ENCODE measurements at regions of chr2 and their contacts with region 1.

Region 1: GRCh38 chr2:227095346-227095745 is 68.7 kb downstream of the COL4A4 start:
- DNase-seq: no peak
- H3K4me3 ChIP-seq: no peak overlapping the region
- H3K27ac ChIP-seq: no peak overlapping the region
- H3K4me1 ChIP-seq: peaks cover 0 to 5% of the 10 kb centered on the region in 2 experiments; a peak in 1 of 4 replicates
- H3K27me3 ChIP-seq: no peaks in the 10 kb centered on the region; the same call in 1 of the 2 replicates
- CTCF ChIP-seq: no peak
- EP300 ChIP-seq: no peak
- RAD21 ChIP-seq: no peak

Region 2: GRCh38 chr2:226887940-226888339 is 207.4 kb before region 1 on chr2:
- CTCF ChIA-PET with region 1: no interaction called
- POLR2A ChIA-PET with region 1: no interaction called
- DNase-seq: no peak
- H3K4me3 ChIP-seq: no peak overlapping the region
- H3K27ac ChIP-seq: no peak overlapping the region
- H3K4me1 ChIP-seq: peaks cover 2 to 14% of the 10 kb centered on the region in 2 experiments; a peak in 3 of 4 replicates
- H3K27me3 ChIP-seq: no peaks in the 10 kb centered on the region
- CTCF ChIP-seq: no peak
- EP300 ChIP-seq: no peak
- RAD21 ChIP-seq: no peak

Region 3: DNA sequence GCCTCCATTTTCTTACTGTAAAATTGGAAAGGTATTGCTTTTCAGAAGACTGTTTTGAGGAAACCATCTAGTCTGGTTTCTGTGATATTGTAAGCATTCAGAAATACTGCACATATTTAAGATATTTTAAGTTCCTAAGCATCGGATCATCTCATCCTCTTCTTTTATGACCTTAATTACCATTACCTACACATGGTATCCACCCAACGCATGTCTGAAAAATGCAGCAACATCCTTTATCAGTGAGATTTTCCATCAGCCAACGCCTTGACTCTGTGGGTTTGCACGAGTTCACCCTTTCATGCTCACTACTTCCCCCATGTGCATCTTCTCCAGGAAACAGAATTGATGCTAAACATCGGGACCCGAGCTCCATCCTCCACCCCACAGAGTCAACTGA is 15.6 kb before region 1 on chr2:
- CTCF ChIA-PET with region 1: no interaction called
- POLR2A ChIA-PET with region 1: no interaction called
- DNase-seq: no peak
- H3K4me3 ChIP-seq: no peak overlapping the region
- H3K27ac ChIP-seq: no peak overlapping the region
- H3K4me1 ChIP-seq: no peaks in the 10 kb centered on the region
- H3K27me3 ChIP-seq: no peaks in the 10 kb centered on the region
- CTCF ChIP-seq: no peak
- EP300 ChIP-seq: no peak
- RAD21 ChIP-seq: no peak

Region 4: GRCh38 chr2:227106845-227107759 is 11.8 kb after region 1 on chr2:
- CTCF ChIA-PET with region 1: interaction called, 27 read pairs
- POLR2A ChIA-PET with region 1: no interaction called
- DNase-seq: peak; percentile 45
- H3K4me3 ChIP-seq: no peak overlapping the region; a peak in 1 of 4 replicates
- H3K27ac ChIP-seq: no peak overlapping the region
- H3K4me1 ChIP-seq: no peaks in the 10 kb centered on the region; a peak in 1 of 4 replicates
- H3K27me3 ChIP-seq: peaks cover 11% of the 10 kb centered on the region; the same call in 1 of the 2 replicates
- CTCF ChIP-seq: peak; percentile 85
- EP300 ChIP-seq: no peak
- RAD21 ChIP-seq: peak; percentile 95